ENCODE measurements at regions of chr17 and their contacts with region 1.

Region 1: DNA sequence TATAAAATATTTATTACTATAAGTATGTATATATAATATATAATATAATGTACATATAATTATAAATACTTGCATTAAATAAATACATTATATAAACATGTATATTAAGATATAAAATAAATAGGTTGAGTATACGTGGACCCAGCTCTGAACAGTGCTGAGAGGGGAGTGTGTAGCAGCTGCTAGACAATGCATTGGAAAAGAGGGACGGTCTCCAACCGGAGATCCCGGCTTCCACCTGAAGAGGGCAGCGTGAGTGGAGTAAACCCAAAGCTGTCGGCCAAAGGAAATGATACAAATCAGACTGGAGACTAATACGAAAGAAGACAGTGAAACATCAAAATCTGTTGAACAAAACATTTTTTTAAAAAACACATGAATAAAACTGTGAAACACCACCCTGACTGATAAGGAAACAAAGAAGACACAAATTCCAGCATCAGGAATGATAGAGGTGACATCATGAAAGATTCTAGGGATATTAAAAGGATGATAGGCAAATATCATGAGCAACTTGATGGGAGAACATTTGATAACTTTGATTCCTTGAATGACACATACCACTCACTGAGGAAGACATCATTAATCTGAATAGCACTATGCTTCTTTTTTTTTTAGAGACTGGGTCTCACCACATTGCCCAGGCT is 125.4 kb upstream of the CHMP6 start:
- DNase-seq: peak; percentile 70 to 82
- ATAC-seq: peak; percentile 85 to 87 (median 86)
- H3K4me3 ChIP-seq: no peak overlapping the region
- H3K27ac ChIP-seq: no peak overlapping the region
- H3K4me1 ChIP-seq: no peaks in the 10 kb centered on the region
- H3K27me3 ChIP-seq: no peaks in the 10 kb centered on the region
- CTCF ChIP-seq: peak; percentile 80

Region 2: GRCh38 chr17:79290726-79291125 is 1575.5 kb before region 1 on chr17:
- intact Hi-C with region 1: no loop called
- DNase-seq: no peak
- ATAC-seq: no peak
- H3K4me3 ChIP-seq: no peak overlapping the region
- H3K27ac ChIP-seq: no peak overlapping the region
- H3K4me1 ChIP-seq: no peaks in the 10 kb centered on the region
- H3K27me3 ChIP-seq: peaks cover 0 to 44% (median 3%) of the 10 kb centered on the region in 3 donors
- CTCF ChIP-seq: no peak

Region 3: GRCh38 chr17:80817321-80818251 is 48.7 kb before region 1 on chr17:
- intact Hi-C with region 1: no loop called
- DNase-seq: peak in 1 of 2 donors; percentile 42
- ATAC-seq: peak; percentile 28 to 57 (median 52)
- H3K4me3 ChIP-seq: no peak overlapping the region
- H3K27ac ChIP-seq: no peak overlapping the region
- H3K4me1 ChIP-seq: peaks cover 7% of the 10 kb centered on the region
- H3K27me3 ChIP-seq: no peaks in the 10 kb centered on the region
- CTCF ChIP-seq: no peak

Region 4: DNA sequence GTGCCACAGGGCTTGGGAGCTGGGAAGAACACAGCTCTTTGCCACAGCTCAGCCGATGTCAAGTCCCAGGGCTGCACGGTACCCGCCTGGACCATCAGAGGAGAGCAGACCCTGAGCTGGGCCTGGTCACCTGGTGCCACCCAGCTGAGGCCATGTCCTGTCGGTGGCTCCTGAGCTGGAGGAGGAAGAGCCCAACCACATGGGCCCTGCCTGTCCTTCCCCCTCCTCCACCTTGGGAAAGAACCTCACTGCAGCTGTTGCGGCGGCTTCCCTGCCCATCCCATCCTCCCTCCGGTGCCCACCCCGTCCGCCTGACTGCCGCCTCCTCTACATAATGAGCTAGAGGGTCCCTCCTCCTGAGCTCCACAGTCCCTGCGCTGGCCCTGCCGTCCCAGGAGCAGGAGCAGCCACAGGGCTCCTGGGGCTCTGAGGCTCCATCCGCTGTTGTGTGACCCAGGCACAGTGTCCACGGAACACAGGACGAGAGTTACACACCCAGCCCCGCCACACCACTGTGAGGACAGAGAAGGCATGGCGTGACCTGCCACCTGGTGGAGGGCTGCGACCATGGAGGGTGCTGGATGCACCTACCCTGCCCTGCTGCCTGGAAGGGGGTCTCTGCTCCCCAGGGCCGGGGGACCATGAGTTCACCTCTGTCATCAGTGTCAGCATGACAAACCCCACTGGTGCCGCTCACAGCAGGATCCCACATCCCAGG is 103.9 kb after region 1 on chr17:
- intact Hi-C with region 1: loop called in 1 of 2 experiments (anchors 10 kb)
- DNase-seq: peak; percentile 62 to 80
- ATAC-seq: peak; percentile 68 to 78 (median 74)
- H3K4me3 ChIP-seq: no peak overlapping the region
- H3K27ac ChIP-seq: no peak overlapping the region
- H3K4me1 ChIP-seq: peaks cover 20% of the 10 kb centered on the region
- H3K27me3 ChIP-seq: peaks cover 0 to 3% (median 0%) of the 10 kb centered on the region in 3 donors
- CTCF ChIP-seq: peak; percentile 54

Region 5: GRCh38 chr17:80981062-80981902 is 115.0 kb after region 1 on chr17:
- intact Hi-C with region 1: loop called (anchors 5 to 10 kb)
- DNase-seq: peak in 1 of 2 donors; percentile 63
- ATAC-seq: peak; percentile 52 to 72 (median 62)
- H3K4me3 ChIP-seq: peak overlapping the region; percentile 36
- H3K27ac ChIP-seq: no peak overlapping the region
- H3K4me1 ChIP-seq: peaks cover 4% of the 10 kb centered on the region
- H3K27me3 ChIP-seq: peaks cover 0 to 7% (median 3%) of the 10 kb centered on the region in 3 donors
- CTCF ChIP-seq: peak; percentile 83

Measured in psoas muscle (tissue), 8 donors.